ENCODE measurements at regions of chr14 and their contacts with region 1.

Region 1: GRCh38 chr14:73958591-73958990 is 8.5 kb downstream of the COQ6 start:
- DNase-seq: no peak
- H3K27ac ChIP-seq: no peak overlapping the region
- CTCF ChIP-seq: no peak

Region 2: GRCh38 chr14:73997108-73997943 is 38.7 kb after region 1 on chr14:
- CTCF ChIA-PET with region 1: interaction called, 10 read pairs
- POLR2A ChIA-PET with region 1: no interaction called
- DNase-seq: no peak
- H3K27ac ChIP-seq: no peak overlapping the region
- CTCF ChIP-seq: no peak

Measured in RWPE1 (cell line).